Activated CD4-positive, alpha-beta memory T cell treated with anti-CD3 and anti-CD28 coated beads for 36 hours (primary cell): ENCODE measurements at regions of chr11 and their contacts with region 1.

Region 1: DNA sequence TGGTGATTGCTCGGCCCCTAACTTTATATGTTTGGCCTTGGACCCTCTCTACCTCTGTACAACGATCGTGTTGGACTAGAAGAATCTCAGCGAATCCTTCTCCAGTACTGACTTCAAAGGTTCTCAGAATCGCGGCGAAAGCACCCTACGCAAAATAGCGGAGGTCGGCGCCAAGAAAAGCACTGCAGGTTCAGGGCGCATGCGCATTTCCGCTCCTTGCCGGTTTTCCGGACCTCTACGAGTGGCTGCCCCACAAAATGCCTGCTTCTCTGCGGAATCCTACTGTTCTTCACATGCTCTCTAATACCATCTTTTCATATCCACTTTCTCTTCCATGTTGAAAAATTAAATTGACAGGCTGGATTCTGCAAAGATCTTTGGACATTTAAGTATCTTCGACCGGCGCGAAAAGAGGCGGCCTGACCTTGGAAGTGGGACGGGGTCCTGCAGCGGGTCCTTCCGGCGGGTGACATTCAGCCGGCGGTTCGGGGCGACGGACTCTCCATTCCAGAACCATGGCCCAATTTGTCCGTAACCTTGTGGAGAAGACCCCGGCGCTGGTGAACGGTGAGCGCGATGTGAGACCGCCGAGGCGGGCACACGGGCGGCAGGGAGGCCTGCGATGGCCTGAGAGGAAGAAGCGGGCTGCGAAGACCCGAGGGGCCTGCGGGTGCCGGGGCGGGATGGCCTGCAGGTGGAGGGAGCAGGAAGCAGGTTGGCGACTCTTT is at the start of gene ATP5MG:
- DNase-seq: peak; percentile 95
- H3K4me3 Mint-ChIP-seq: peak within 1 kb of the TSS; percentile 97
- H3K27ac Mint-ChIP-seq: peak within 1 kb of the TSS; percentile 98
- H3K4me1 Mint-ChIP-seq: peaks cover 66% of the 10 kb centered on the region
- H3K27me3 Mint-ChIP-seq: no peaks in the 10 kb centered on the region
- total RNA-seq, gene ATP5MG: 298 to 306 TPM

Region 2: GRCh38 chr11:118338637-118339061 is 62.7 kb before region 1 on chr11:
- CTCF ChIA-PET with region 1: no interaction called
- POLR2A ChIA-PET with region 1: interaction called, 3 read pairs
- intact Hi-C with region 1: loop called (anchors 5 kb)
- DNase-seq: peak; percentile 95
- H3K4me3 Mint-ChIP-seq: peak overlapping the region; percentile 82
- H3K27ac Mint-ChIP-seq: peak overlapping the region; percentile 98
- H3K4me1 Mint-ChIP-seq: peaks cover 48% of the 10 kb centered on the region
- H3K27me3 Mint-ChIP-seq: no peaks in the 10 kb centered on the region

Region 3: GRCh38 chr11:118359295-118359958 is 41.9 kb before region 1 on chr11 and contains the start of gene UBE4A:
- CTCF ChIA-PET with region 1: no interaction called
- POLR2A ChIA-PET with region 1: no interaction called
- intact Hi-C with region 1: loop called (anchors 2 kb)
- DNase-seq: peak; percentile 99
- H3K4me3 Mint-ChIP-seq: peak within 1 kb of the TSS; percentile 96
- H3K27ac Mint-ChIP-seq: peak within 1 kb of the TSS; percentile 93
- H3K4me1 Mint-ChIP-seq: peaks cover 45% of the 10 kb centered on the region
- H3K27me3 Mint-ChIP-seq: peaks cover 2% of the 10 kb centered on the region
- total RNA-seq, gene UBE4A: 39.1 to 40.4 TPM

Region 4: DNA sequence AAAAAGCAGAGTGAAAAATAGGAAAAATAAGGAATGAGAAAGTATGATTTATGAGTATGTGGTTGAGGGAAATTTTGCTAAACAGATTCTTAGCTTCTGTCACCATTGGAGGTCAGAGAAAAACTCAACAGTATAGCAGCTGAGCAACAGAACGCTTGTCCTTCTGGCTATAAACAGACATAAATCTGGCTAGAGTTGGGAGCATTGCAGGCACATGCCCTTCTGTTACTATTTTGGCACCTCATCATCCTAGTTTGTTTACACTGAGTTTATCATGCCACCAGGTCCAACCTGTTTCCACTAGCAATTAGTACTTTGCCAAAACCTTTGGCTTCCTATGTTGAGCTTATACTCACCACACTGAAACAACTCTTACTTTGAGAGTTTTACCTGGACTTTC is 35.0 kb before region 1 on chr11:
- CTCF ChIA-PET with region 1: interaction called, 3 read pairs
- POLR2A ChIA-PET with region 1: no interaction called
- intact Hi-C with region 1: loop called (anchors 2 kb)
- DNase-seq: no peak
- H3K4me3 Mint-ChIP-seq: no peak overlapping the region
- H3K27ac Mint-ChIP-seq: no peak overlapping the region
- H3K4me1 Mint-ChIP-seq: peaks cover 26% of the 10 kb centered on the region
- H3K27me3 Mint-ChIP-seq: no peaks in the 10 kb centered on the region

Region 5: GRCh38 chr11:118448294-118448693 is 47.0 kb after region 1 on chr11:
- CTCF ChIA-PET with region 1: interaction called, 5 read pairs
- POLR2A ChIA-PET with region 1: interaction called, 4 read pairs
- intact Hi-C with region 1: loop called (anchors 1 kb)
- DNase-seq: no peak
- H3K4me3 Mint-ChIP-seq: no peak overlapping the region
- H3K27ac Mint-ChIP-seq: no peak overlapping the region
- H3K4me1 Mint-ChIP-seq: peaks cover 72% of the 10 kb centered on the region
- H3K27me3 Mint-ChIP-seq: no peaks in the 10 kb centered on the region

Region 6: GRCh38 chr11:118488480-118489109 is 87.3 kb after region 1 on chr11:
- CTCF ChIA-PET with region 1: interaction called, 24 read pairs
- POLR2A ChIA-PET with region 1: interaction called, 7 read pairs
- intact Hi-C with region 1: loop called (anchors 1 kb)
- DNase-seq: peak; percentile 86
- H3K4me3 Mint-ChIP-seq: no peak overlapping the region
- H3K27ac Mint-ChIP-seq: no peak overlapping the region
- H3K4me1 Mint-ChIP-seq: peaks cover 5% of the 10 kb centered on the region
- H3K27me3 Mint-ChIP-seq: no peaks in the 10 kb centered on the region

Region 7: DNA sequence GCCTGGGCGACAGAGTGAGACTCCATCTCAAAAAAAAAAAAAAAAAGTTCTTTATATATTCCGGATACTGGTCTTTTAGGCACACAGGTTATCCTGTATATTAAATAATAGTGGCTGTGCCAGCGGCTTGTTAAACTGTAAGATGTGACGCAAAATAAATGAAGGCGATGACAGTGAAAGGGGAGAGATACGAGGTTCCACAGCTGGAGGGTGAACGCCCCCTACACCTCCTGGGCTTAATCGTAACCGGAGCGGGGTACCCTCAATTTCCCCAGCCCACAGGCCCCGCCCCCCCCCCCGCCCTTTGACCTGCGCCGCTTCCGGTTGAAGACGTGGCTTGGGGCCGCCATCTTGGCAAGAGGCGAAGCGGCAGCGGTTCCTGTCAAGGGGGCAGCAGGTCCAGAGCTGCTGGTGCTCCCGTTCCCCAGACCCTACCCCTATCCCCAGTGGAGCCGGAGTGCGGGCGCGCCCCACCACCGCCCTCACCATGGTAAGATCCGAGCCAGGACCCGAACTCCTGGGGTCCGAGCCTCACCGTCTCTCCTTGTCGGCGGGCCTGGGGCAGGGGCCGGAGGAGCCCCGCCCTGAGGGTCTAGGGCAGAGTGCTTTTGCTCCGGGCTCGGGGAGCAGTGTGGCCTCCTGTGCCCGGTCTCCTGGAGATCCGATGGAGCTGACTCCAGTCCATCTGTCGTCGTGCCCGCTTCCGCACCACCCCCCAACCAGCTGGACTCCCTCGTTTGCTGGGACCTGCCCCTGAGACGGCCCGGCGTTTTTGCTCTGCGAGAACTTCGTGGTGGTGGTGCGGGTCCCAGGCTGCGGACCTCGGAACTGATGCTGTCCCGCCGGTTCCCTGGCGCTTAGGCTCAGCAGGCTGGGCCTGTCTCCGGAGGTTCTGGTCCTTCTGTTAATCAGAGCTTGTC is 171.0 kb after region 1 on chr11 and contains the start of gene ARCN1:
- CTCF ChIA-PET with region 1: interaction called, 7 read pairs
- POLR2A ChIA-PET with region 1: interaction called, 3 read pairs
- intact Hi-C with region 1: loop called (anchors 2 kb)
- DNase-seq: peak; percentile 87
- H3K4me3 Mint-ChIP-seq: peak within 1 kb of the TSS; percentile 87
- H3K27ac Mint-ChIP-seq: peak within 1 kb of the TSS; percentile 92
- H3K4me1 Mint-ChIP-seq: peaks cover 52% of the 10 kb centered on the region
- H3K27me3 Mint-ChIP-seq: no peaks in the 10 kb centered on the region
- total RNA-seq, gene ARCN1: 180 to 182 TPM